ENCODE measurements at regions of chr2 and their contacts with region 1.

Region 1: DNA sequence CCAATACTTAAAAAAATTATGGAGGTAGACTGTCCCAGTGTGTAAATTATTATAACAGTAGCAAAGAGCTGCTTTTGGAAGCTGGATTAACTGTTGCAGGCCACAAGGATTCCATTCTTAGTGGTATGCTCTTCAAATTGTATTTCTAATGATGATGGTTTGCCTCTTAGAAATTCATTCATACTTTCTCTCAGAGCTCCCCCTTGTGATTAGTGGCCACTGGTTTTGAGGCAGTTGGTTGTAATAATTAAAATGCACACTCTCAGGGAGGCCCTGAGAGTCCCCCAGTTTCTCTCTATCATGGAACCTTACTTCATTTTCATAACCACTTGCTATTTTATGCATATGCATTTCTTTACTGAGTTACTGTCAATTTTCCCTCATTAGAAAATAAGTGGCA is 122.5 kb downstream of the PLA2R1 start:
- DNase-seq: no peak
- H3K4me3 Mint-ChIP-seq: no peak overlapping the region
- H3K27ac Mint-ChIP-seq: no peak overlapping the region
- H3K4me1 Mint-ChIP-seq: peaks cover 6% of the 10 kb centered on the region
- H3K27me3 Mint-ChIP-seq: peaks cover 5% of the 10 kb centered on the region

Region 2: DNA sequence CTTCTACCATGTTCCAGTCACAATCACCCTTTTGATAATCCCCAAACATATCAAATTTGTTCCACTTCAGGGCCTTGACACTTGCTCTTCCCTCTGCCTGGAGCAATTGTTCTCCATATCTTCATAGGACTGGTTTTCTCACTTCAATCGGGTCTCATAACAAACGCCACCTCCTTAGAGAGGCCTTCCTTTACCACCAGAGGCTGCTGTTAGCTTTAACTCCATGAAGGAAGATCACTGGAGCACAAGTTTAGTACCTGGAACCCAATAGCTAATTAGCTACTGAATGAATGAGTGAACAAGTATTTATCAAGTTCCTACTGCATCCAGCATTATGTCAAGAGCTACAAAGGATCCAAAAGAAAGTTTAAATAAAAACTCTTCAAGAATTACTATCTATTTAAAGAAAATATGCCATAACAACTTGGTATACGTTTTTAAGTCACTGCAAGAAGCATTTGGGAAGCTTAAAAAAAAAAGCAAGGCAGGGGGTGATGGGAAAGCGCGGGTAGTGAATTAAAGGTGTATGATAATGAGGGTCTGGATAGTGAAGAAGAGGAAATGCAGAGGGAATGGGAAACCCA is 382.4 kb before region 1 on chr2:
- CTCF ChIA-PET with region 1: no interaction called
- intact Hi-C with region 1: loop called (anchors 5 kb)
- DNase-seq: no peak
- H3K4me3 Mint-ChIP-seq: no peak overlapping the region
- H3K27ac Mint-ChIP-seq: no peak overlapping the region
- H3K4me1 Mint-ChIP-seq: no peaks in the 10 kb centered on the region
- H3K27me3 Mint-ChIP-seq: no peaks in the 10 kb centered on the region

Region 3: DNA sequence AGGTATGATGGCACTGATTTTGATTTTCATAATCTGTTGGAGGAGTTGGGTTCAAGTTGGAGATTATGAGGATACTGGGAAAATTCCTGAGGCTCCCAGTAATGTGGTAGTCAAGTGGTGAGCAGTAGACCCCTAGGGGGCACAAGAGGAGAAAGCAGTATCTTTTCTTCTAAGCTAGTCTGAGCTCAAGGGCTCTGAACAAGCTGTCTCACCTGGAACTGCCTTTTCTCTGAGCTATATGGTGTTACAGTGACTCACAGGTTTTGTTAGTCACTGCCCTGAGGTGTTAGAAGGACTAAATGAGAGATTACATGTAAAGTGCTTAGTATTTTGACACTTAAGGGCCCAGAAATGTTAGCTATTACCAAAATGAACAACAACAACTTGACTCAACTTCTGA is 184.2 kb before region 1 on chr2:
- CTCF ChIA-PET with region 1: no interaction called
- intact Hi-C with region 1: loop called (anchors 5 kb)
- DNase-seq: peak; percentile 54
- H3K4me3 Mint-ChIP-seq: no peak overlapping the region
- H3K27ac Mint-ChIP-seq: no peak overlapping the region
- H3K4me1 Mint-ChIP-seq: peaks cover 22% of the 10 kb centered on the region
- H3K27me3 Mint-ChIP-seq: no peaks in the 10 kb centered on the region

Region 4: GRCh38 chr2:159998961-159999360 is 59.0 kb after region 1 on chr2:
- CTCF ChIA-PET with region 1: no interaction called
- intact Hi-C with region 1: no loop called
- DNase-seq: peak; percentile 21
- H3K4me3 Mint-ChIP-seq: no peak overlapping the region
- H3K27ac Mint-ChIP-seq: no peak overlapping the region
- H3K4me1 Mint-ChIP-seq: no peaks in the 10 kb centered on the region
- H3K27me3 Mint-ChIP-seq: peaks cover 12% of the 10 kb centered on the region

Measured in activated naive CD4-positive, alpha-beta T cell treated with anti-CD3 and anti-CD28 coated beads for 36 hours (primary cell).